ENCODE measurements at regions of chr6 and their contacts with region 1.

Region 1: DNA sequence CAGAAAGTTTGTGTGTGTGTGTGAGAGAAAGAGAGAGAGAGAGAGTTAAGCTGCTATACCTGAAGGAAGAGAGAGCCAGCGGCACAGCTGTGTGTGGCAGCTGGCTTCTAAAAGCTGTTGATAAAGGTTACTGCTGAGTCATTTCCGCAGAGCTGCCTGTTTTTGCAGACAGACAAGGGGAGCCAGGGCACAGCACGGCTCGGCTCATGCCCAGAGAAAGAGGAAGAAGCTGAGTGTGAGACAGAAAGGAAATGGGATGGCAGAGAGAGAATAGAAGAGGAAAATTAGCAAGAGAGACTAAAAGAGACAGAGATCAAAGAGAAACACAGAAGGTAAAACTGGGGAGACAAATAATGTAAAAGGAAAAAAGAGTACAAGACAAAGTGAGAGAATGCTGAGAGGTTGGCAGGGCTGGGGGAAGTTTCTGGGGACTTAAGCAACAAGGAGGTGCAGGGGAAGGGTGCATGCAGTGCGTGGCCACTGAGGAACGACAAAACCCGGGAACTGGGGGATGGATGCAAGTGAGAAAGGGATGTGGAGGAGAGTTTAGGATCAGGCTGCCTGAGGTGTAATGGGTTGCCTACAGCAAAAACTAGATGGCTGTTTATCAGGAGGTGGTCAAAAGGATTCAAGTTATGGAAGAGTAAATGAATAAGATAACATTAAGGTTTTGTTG is 22.7 kb downstream of the HLA-A start:
- DNase-seq: peak; percentile 89
- ATAC-seq: peak; percentile 93
- H3K4me3 ChIP-seq: peak overlapping the region; percentile 66
- H3K27ac ChIP-seq: peak overlapping the region; percentile 93
- H3K4me1 ChIP-seq: peaks cover 5% of the 10 kb centered on the region; the same call in 1 of the 2 replicates
- H3K27me3 ChIP-seq: no peaks in the 10 kb centered on the region
- CTCF ChIP-seq: no peak
- EP300 ChIP-seq: peak; percentile 69 to 78
- POLR2A ChIP-seq: peak; percentile 64
- RAD21 ChIP-seq: no peak

Region 2: DNA sequence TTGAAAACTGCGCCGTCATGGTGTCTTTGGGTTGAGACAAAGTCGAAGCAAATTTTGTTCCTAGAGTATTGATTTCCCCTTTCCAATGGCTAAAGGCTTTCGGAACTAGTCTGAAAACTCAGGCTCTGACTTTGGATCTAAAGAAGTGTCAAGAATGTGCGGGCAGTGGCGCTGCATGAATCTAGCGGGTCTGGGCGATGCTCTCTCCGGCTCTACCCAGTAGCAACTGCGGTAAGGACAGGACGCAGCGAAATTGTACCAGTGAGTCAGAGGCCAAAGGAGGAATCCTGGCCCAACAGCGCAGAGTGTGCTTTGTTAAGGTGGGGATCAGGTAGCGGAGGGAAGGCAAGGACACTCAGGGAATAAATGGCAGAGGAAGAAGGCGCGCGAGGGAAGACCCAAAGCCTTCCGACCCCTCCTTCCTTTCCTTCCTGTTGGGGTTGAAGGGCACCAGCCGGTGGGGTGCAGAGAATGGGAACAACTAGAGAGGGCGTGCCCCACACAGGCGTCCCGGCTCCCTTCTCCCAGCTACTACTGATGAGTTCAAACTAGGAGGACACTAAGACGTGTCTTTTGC is 209.6 kb before region 1 on chr6:
- CTCF ChIA-PET with region 1: no interaction called
- POLR2A ChIA-PET with region 1: no interaction called
- RAD21 ChIA-PET with region 1: no interaction called
- SMC1A ChIA-PET with region 1: no interaction called
- in situ Hi-C with region 1: no loop called
- intact Hi-C with region 1: no loop called
- DNase-seq: no peak
- ATAC-seq: no peak
- H3K4me3 ChIP-seq: no peak overlapping the region
- H3K27ac ChIP-seq: no peak overlapping the region
- H3K4me1 ChIP-seq: peaks cover 7% of the 10 kb centered on the region
- H3K27me3 ChIP-seq: no peaks in the 10 kb centered on the region
- CTCF ChIP-seq: no peak
- EP300 ChIP-seq: no peak
- POLR2A ChIP-seq: no peak
- RAD21 ChIP-seq: no peak

Region 3: GRCh38 chr6:29816030-29816429 is 149.0 kb before region 1 on chr6:
- CTCF ChIA-PET with region 1: no interaction called
- POLR2A ChIA-PET with region 1: no interaction called
- RAD21 ChIA-PET with region 1: no interaction called
- SMC1A ChIA-PET with region 1: no interaction called
- in situ Hi-C with region 1: no loop called
- intact Hi-C with region 1: no loop called
- DNase-seq: no peak
- ATAC-seq: no peak
- H3K4me3 ChIP-seq: no peak overlapping the region
- H3K27ac ChIP-seq: no peak overlapping the region
- H3K4me1 ChIP-seq: no peaks in the 10 kb centered on the region
- H3K27me3 ChIP-seq: no peaks in the 10 kb centered on the region
- CTCF ChIP-seq: no peak
- EP300 ChIP-seq: no peak
- POLR2A ChIP-seq: no peak
- RAD21 ChIP-seq: no peak

Region 4: DNA sequence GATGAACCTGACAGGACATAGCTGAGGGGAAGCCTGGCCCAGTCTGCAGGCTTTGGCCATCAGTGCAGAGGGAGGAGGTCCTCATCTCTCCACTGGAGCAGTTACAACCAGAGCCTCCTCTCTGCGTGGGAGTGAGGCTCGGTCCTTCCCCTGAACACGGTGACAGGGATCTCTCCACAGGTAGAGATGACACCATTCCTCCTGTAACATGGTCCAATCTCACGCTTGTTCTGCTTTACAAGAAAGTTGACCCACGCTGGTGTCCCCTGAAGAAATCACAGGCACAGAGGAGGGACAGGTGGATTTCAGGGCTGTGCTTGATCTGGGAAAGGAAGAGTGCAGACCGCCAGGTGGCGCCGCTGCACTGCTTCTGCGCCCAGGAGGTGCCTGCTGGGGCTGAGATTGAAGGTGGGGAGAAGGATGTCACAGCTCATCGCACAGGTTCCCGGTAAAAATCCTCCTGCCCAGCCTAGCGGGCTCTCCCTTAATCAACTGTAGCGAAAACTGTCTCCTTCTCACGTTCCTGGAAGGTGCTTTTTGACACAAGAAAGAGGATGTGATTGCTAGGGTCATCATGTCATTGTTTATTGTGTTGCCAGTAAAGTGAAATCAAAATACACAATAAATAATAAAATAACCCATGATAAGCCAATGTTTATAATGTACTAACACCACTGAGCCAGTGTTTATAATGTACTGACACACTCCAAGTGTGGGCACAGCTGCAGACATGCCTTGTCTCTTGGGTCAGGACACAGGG is 117.0 kb before region 1 on chr6:
- CTCF ChIA-PET with region 1: interaction called, 71 read pairs
- POLR2A ChIA-PET with region 1: interaction called, 5 read pairs
- RAD21 ChIA-PET with region 1: interaction called, 25 read pairs
- SMC1A ChIA-PET with region 1: interaction called, 26 read pairs
- in situ Hi-C with region 1: no loop called
- intact Hi-C with region 1: loop called (anchors 1 kb)
- DNase-seq: peak; percentile 25
- ATAC-seq: peak; percentile 96
- H3K4me3 ChIP-seq: no peak overlapping the region
- H3K27ac ChIP-seq: no peak overlapping the region
- H3K4me1 ChIP-seq: no peaks in the 10 kb centered on the region
- H3K27me3 ChIP-seq: peaks cover 3 to 5% of the 10 kb centered on the region in 2 experiments; a peak in 2 of 4 replicates
- CTCF ChIP-seq: peak; percentile 89 to 98 (median 93)
- EP300 ChIP-seq: no peak
- POLR2A ChIP-seq: no peak
- RAD21 ChIP-seq: peak; percentile 99

Region 5: DNA sequence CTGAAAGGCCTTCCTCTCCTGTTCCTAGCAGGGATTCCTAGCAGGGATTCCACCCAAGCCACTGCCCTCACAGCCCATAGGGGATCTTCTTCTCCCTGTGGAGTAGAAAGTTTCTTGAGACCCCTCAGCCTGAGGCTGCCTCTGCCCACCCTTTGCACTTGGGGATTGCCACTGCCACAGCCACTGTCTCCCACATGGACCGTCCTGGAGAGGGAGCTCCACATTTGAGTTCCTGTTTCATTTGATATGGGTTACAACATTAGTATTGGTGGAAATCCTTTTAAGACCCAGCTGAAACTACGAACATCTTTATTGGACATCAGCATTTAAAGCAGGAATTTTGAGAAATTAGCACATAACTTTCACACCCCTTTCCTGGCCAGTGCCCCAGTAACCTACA is 111.8 kb before region 1 on chr6:
- CTCF ChIA-PET with region 1: interaction called, 71 read pairs
- POLR2A ChIA-PET with region 1: interaction called, 5 read pairs
- RAD21 ChIA-PET with region 1: interaction called, 25 read pairs
- SMC1A ChIA-PET with region 1: interaction called, 26 read pairs
- in situ Hi-C with region 1: no loop called
- intact Hi-C with region 1: loop called (anchors 1 kb)
- DNase-seq: no peak
- ATAC-seq: no peak
- H3K4me3 ChIP-seq: no peak overlapping the region
- H3K27ac ChIP-seq: no peak overlapping the region
- H3K4me1 ChIP-seq: no peaks in the 10 kb centered on the region
- H3K27me3 ChIP-seq: peaks cover 1 to 3% of the 10 kb centered on the region in 2 experiments; a peak in 1 of 4 replicates
- CTCF ChIP-seq: no peak
- EP300 ChIP-seq: no peak
- POLR2A ChIP-seq: no peak
- RAD21 ChIP-seq: no peak

Region 6: GRCh38 chr6:29887819-29888776 is 76.9 kb before region 1 on chr6:
- CTCF ChIA-PET with region 1: interaction called, 4 read pairs
- POLR2A ChIA-PET with region 1: interaction called, 4 read pairs
- RAD21 ChIA-PET with region 1: interaction called, 5 read pairs
- SMC1A ChIA-PET with region 1: interaction called, 11 read pairs
- in situ Hi-C with region 1: no loop called
- intact Hi-C with region 1: no loop called
- DNase-seq: peak; percentile 25
- ATAC-seq: peak; percentile 92
- H3K4me3 ChIP-seq: peak overlapping the region; percentile 86
- H3K27ac ChIP-seq: peak overlapping the region; percentile 75
- H3K4me1 ChIP-seq: no peaks in the 10 kb centered on the region
- H3K27me3 ChIP-seq: no peaks in the 10 kb centered on the region
- CTCF ChIP-seq: no peak
- EP300 ChIP-seq: no peak
- POLR2A ChIP-seq: peak; percentile 83
- RAD21 ChIP-seq: no peak

Region 7: GRCh38 chr6:29942275-29943052 is 22.6 kb before region 1 on chr6 and contains the start of gene HLA-A:
- CTCF ChIA-PET with region 1: interaction called, 12 read pairs
- POLR2A ChIA-PET with region 1: interaction called, 27 read pairs
- RAD21 ChIA-PET with region 1: interaction called, 9 read pairs
- SMC1A ChIA-PET with region 1: interaction called, 38 read pairs
- in situ Hi-C with region 1: no loop called
- intact Hi-C with region 1: loop called (anchors 2 kb)
- DNase-seq: peak; percentile 92
- ATAC-seq: peak; percentile 93
- H3K4me3 ChIP-seq: peak within 1 kb of the TSS; percentile 73
- H3K27ac ChIP-seq: peak within 1 kb of the TSS; percentile 99
- H3K4me1 ChIP-seq: no peaks in the 10 kb centered on the region
- H3K27me3 ChIP-seq: no peaks in the 10 kb centered on the region
- CTCF ChIP-seq: no peak
- EP300 ChIP-seq: 0 out of 4 replicates have a peak, but pooled peaks of 1 of the 2 experiments have one; percentile 34
- POLR2A ChIP-seq: peak; percentile 98
- RAD21 ChIP-seq: no peak
- polyA plus RNA-seq, gene HLA-A: 129 to 329 TPM

Region 8: DNA sequence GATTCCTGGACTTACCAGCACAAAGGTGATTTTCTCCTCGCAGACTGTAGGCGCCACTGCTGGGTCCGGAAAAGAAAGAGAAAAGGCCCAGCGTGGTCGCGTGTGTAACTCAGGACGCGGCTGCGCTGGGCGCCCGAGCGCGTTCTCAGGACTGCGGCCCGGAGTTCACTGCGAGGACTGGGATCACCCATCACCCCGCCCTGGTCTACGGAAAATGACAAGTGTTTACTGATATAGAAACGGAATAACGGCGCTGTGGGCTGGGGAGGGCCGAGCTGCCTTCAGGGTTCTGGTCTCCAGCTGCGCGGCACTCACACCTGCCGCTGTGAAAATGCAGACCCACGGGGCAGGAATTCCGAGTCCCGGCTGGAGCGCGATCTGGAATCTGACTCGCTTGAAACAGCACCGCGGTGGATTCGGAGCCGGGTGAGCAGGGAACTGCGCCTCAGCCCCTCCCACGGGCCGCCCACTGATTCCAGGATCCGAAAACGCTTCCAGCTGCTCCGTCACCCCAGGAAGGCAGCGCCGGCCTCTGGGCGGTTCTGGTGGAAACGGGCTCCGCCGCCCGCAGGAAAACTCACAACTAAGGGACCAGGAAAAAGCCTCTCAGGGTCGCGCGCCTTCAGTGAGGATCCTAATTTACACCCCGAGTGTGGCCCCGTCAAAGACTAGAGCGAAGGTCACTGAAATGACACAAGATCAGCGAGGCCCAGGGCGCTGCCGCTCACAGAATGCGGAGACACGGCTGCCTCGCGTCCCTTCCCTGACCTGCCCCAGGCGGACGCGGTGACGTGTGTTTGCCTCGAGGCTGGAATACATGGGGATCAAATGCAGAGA is 11.8 kb after region 1 on chr6:
- CTCF ChIA-PET with region 1: interaction called, 21 read pairs
- POLR2A ChIA-PET with region 1: interaction called, 6 read pairs
- RAD21 ChIA-PET with region 1: interaction called, 5 read pairs
- SMC1A ChIA-PET with region 1: interaction called, 11 read pairs
- in situ Hi-C with region 1: no loop called
- intact Hi-C with region 1: no loop called
- DNase-seq: peak; percentile 13
- ATAC-seq: peak; percentile 99
- H3K4me3 ChIP-seq: peak overlapping the region; percentile 58
- H3K27ac ChIP-seq: no peak overlapping the region
- H3K4me1 ChIP-seq: peaks cover 4% of the 10 kb centered on the region; the same call in 1 of the 2 replicates
- H3K27me3 ChIP-seq: peaks cover 6 to 16% of the 10 kb centered on the region in 2 experiments
- CTCF ChIP-seq: peak; percentile 33 to 52 (median 45); a peak in 4 of 6 replicates
- EP300 ChIP-seq: no peak
- POLR2A ChIP-seq: no peak
- RAD21 ChIP-seq: peak; percentile 47

Measured in GM12878 (cell line).